ENCODE measurements at regions of chr11 and their contacts with region 1.

Region 1: DNA sequence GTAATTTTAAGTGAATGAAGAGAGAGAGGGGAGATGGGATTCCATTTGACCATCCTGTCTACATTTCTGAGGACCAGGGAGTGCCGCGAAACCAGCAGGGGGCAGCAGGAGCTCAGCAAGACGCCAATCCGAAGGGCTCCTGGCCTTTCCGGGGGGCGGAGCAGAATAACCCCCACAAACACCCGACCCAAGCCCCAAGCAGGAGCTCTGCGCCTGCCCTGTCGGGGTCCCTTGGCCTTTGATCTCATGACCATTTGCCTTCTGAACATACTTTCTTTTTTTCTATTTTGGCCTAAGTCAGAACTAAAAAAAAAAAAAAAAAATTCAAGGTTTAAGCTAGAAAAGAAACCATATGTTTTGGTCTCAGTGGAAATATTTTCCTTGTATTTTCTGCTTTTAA is 21.9 kb upstream of the SCN2B start:
- DNase-seq: peak; percentile 42 to 52
- ATAC-seq: no peak
- H3K4me3 ChIP-seq: peak overlapping the region in 1 of 4 donors; percentile 4
- H3K27ac ChIP-seq: no peak overlapping the region
- H3K4me1 ChIP-seq: peaks cover 20 to 21% of the 10 kb centered on the region in 2 donors
- H3K27me3 ChIP-seq: no peaks in the 10 kb centered on the region
- CTCF ChIP-seq: peak; percentile 69 to 88 (median 80)
- POLR2A ChIP-seq: no peak

Region 2: DNA sequence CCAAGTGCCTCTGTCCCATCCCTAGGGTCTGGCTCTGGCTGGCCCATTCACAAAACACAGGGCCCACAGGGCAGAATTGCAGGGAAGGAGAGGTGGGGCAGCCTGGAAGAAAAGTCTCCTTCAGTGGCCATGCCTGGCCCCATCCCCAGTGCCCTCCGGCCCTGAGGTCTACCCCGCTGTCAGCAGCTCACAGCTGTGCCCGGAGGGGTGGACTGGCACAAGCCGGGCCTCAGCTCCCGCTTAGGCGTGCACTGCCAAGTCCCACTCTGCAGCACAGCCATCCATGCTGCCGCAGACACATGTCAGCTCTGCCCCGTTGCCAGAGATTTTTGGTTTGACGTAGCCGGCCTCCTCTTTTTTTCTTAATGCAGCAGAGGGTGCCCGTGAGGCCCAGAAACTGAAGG is 18.1 kb before region 1 on chr11:
- in situ Hi-C with region 1: no loop called
- intact Hi-C with region 1: loop called (anchors 2 kb)
- DNase-seq: peak; percentile 18 to 50
- ATAC-seq: peak; percentile 74 to 79
- H3K4me3 ChIP-seq: peak overlapping the region in 2 of 4 donors; percentile 22 to 35
- H3K27ac ChIP-seq: peak overlapping the region; percentile 44 to 69 (median 63)
- H3K4me1 ChIP-seq: peaks cover 23 to 28% of the 10 kb centered on the region in 2 donors
- H3K27me3 ChIP-seq: no peaks in the 10 kb centered on the region
- CTCF ChIP-seq: no peak
- POLR2A ChIP-seq: no peak

Region 3: DNA sequence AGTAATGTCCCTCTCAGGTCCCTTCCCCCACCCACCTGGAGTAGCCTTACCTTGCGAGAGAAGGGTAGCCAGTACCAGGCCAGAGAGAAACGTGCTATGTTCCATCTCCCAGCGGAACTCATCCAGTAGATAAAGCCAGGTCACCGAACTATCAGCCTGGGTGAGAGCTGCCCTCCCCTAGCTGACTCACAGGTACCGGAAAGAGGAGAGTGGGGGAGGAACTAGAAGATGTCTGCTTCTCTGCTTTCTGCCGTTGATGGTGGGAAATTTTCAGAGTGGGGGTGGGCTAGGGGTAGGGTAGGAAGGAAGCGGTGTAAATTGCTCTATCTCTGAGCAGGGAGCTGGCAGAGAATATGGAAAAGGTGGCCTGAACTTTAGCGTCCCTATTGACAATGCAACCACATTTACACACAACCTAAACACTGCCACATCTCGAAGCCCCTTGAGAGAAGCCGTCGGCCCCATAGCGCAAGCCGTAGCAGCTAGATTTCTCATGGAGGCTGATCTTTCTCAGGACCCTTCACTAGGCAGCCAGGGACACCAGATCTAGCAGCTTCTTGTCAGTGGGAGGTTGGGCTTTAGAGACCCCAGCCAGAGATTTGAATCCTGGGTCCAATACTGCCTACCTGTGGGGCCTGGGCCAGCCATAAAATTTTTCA is 144.3 kb after region 1 on chr11 and contains the start of gene CD3D:
- in situ Hi-C with region 1: loop called in 1 of 4 experiments (anchors 10 kb)
- intact Hi-C with region 1: no loop called
- DNase-seq: no peak
- ATAC-seq: no peak
- H3K4me3 ChIP-seq: no peak within 1 kb of the TSS
- H3K27ac ChIP-seq: no peak within 1 kb of the TSS
- H3K4me1 ChIP-seq: no peaks in the 10 kb centered on the region
- H3K27me3 ChIP-seq: no peaks in the 10 kb centered on the region
- CTCF ChIP-seq: no peak
- POLR2A ChIP-seq: no peak
- total RNA-seq, gene CD3D: 0.35 to 3.0 (median 0.46) TPM in 3 of 4 donors, not detected in the other

Region 4: GRCh38 chr11:118359295-118359958 is 161.1 kb after region 1 on chr11 and contains the start of gene UBE4A:
- in situ Hi-C with region 1: loop called in 2 of 4 experiments (anchors 5 to 10 kb)
- intact Hi-C with region 1: loop called (anchors 2 kb)
- DNase-seq: peak; percentile 89 to 92
- ATAC-seq: peak; percentile 84 to 97
- H3K4me3 ChIP-seq: peak within 1 kb of the TSS; percentile 72 to 88 (median 76)
- H3K27ac ChIP-seq: peak within 1 kb of the TSS; percentile 70 to 83 (median 76)
- H3K4me1 ChIP-seq: peaks cover 25 to 28% of the 10 kb centered on the region in 2 donors
- H3K27me3 ChIP-seq: no peaks in the 10 kb centered on the region
- CTCF ChIP-seq: no peak
- POLR2A ChIP-seq: peak; percentile 54 to 60
- total RNA-seq, gene UBE4A: 36.6 to 73.9 (median 41.7) TPM

Region 5: GRCh38 chr11:118462178-118462577 is 263.8 kb after region 1 on chr11:
- in situ Hi-C with region 1: no loop called
- intact Hi-C with region 1: no loop called
- DNase-seq: no peak
- ATAC-seq: no peak
- H3K4me3 ChIP-seq: no peak overlapping the region
- H3K27ac ChIP-seq: no peak overlapping the region
- H3K4me1 ChIP-seq: peaks cover 0 to 3% of the 10 kb centered on the region in 2 donors
- H3K27me3 ChIP-seq: no peaks in the 10 kb centered on the region
- CTCF ChIP-seq: no peak
- POLR2A ChIP-seq: no peak

Region 6: GRCh38 chr11:118488480-118489109 is 290.2 kb after region 1 on chr11:
- in situ Hi-C with region 1: loop called in 3 of 4 experiments (anchors 5 to 25 kb)
- intact Hi-C with region 1: loop called (anchors 1 kb)
- DNase-seq: peak; percentile 27 to 43
- ATAC-seq: peak; percentile 65 to 79
- H3K4me3 ChIP-seq: no peak overlapping the region
- H3K27ac ChIP-seq: peak overlapping the region in 1 of 4 donors; percentile 25
- H3K4me1 ChIP-seq: peaks cover 0 to under 1% of the 10 kb centered on the region in 2 donors
- H3K27me3 ChIP-seq: no peaks in the 10 kb centered on the region
- CTCF ChIP-seq: peak; percentile 69 to 81 (median 78)
- POLR2A ChIP-seq: no peak

Region 7: GRCh38 chr11:118565051-118565450 is 366.7 kb after region 1 on chr11:
- in situ Hi-C with region 1: no loop called
- intact Hi-C with region 1: loop called (anchors 5 kb)
- DNase-seq: no peak
- ATAC-seq: no peak
- H3K4me3 ChIP-seq: peak overlapping the region; percentile 72 to 86 (median 78)
- H3K27ac ChIP-seq: peak overlapping the region; percentile 38 to 85 (median 82)
- H3K4me1 ChIP-seq: peaks cover 7% of the 10 kb centered on the region in 2 donors
- H3K27me3 ChIP-seq: no peaks in the 10 kb centered on the region
- CTCF ChIP-seq: no peak
- POLR2A ChIP-seq: no peak

Measured in gastrocnemius medialis (tissue), 4 donors.